ENCODE measurements at regions of chr9 and their contacts with region 1.

Region 1: DNA sequence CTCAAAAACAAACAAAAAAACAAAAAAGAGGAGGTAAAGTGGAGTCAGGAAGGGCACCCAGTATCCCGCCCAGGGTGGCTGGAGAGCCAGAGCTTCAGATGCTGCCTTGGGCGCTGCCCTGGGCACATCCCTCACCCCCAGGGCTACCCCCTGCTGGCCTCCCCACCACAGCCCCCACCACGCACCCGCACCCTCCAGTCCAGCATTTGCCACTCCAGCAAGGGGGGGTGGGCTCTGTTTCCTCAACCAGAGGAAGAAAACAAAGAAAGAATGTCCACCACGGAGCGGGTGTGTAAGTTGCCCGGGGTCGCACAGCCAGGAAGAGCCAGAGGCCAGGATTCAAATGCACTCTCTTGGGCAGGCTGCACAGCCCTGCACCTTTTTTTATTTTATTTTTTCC is 86.1 kb downstream of the NTNG2 start:
- DNase-seq: no peak
- H3K4me3 ChIP-seq: no peak overlapping the region
- H3K27ac ChIP-seq: no peak overlapping the region
- H3K4me1 ChIP-seq: no peaks in the 10 kb centered on the region
- H3K27me3 ChIP-seq: peaks cover 0 to 19% of the 10 kb centered on the region in 2 donors
- CTCF ChIP-seq: no peak
- POLR2A ChIP-seq: no peak

Region 2: DNA sequence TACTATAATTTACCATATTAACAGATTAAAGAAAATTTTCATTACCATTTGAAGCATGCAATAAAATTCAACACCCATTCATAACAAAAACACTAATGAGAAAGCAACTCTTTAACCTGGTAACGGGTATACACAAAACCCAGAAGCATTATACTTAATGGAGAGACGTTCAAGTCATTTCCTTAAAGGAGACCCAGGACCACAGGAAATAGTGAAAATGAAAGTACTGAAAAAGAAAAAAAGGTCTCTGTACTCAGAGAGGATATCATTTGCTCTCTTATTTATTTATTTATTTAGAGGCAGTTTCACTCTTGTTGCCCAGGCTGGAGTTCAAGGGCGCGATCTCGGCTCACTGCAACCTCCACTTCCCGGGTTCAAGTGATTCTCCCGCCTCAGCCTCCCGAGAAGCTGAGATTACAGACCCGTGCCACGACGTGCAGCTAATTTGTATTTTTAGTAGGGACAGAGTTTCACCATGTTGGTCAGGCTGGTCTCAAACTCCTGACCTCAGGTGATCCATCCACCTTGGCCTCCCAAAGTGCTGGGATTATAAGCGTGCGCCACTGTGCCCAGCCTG is 45.3 kb after region 1 on chr9:
- intact Hi-C with region 1: loop called (anchors 2 kb)
- DNase-seq: no peak
- H3K4me3 ChIP-seq: no peak overlapping the region
- H3K27ac ChIP-seq: no peak overlapping the region
- H3K4me1 ChIP-seq: no peaks in the 10 kb centered on the region
- H3K27me3 ChIP-seq: no peaks in the 10 kb centered on the region
- CTCF ChIP-seq: no peak
- POLR2A ChIP-seq: no peak